Left cardiac atrium (tissue), 4 donors: ENCODE measurements at regions of chr4 and their contacts with region 1.

Region 1: GRCh38 chr4:112636688-112637551 is at the starts of genes LARP7 and ZGRF1:
- DNase-seq: peak; percentile 99
- ATAC-seq: peak; percentile 98 to 99
- total RNA-seq, gene LARP7: 43.9 to 44.9 TPM
- total RNA-seq, gene ZGRF1: 1.8 to 2.8 TPM

Region 2: GRCh38 chr4:112585977-112586736 is 50.8 kb before region 1 on chr4:
- intact Hi-C with region 1: no loop called
- DNase-seq: no peak
- ATAC-seq: no peak

Region 3: DNA sequence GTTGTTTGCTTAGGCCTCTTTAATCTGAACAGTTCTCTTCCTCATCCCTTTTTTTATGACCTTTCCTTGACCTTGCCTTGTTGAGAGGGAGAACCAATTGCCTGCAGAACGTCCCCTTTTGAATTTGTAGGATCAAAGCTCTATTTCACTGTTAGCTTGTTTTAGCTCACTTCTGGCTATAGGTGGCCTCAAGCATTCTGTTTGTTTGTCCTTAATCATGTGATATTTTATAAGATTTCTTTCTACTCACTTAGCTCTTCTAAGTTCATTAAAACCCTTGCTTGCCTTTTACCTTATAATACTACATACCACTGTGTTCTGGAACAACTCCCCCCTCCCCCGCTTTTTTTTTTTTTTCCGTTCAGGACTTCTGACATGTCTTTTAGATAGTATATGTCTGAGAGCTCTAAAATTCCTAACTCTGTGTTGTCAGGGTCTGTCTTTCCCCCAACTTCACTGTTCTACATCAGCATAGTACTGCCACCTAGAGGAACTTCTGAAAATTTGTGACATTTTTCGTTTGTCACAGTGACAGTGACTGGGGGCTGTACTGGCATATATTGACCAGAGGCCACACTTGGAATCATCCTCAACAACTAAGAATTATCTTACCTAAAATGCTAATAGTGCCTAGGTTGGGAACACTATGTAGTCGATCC is 128.5 kb after region 1 on chr4:
- intact Hi-C with region 1: loop called (anchors 5 to 10 kb)
- DNase-seq: no peak
- ATAC-seq: peak in 1 of 2 donors; percentile 53

Region 4: GRCh38 chr4:113094802-113095201 is 457.9 kb after region 1 on chr4:
- intact Hi-C with region 1: loop called in 1 of 2 experiments (anchors 10 kb)
- DNase-seq: no peak
- ATAC-seq: no peak

Region 5: DNA sequence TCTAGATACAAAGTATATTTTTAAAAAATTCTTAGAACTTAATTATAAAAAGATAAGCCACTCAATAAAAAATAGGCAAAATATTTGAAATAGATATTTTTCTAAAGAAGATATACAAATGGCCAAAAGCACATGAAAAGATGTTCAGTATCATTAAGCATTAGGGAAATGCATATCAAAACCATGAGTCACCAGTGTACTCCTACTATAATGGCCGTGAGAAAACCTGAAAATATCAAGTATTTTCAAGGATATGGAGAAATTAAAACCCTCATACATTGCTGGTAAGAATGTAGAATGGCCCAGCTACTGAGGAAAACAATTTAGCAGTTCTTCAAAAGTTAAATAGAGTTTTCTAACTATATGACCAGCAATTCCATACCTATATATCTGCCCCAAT is 786.7 kb after region 1 on chr4:
- intact Hi-C with region 1: no loop called
- DNase-seq: no peak
- ATAC-seq: no peak